ENCODE measurements at regions of chr22 and their contacts with region 1.

Region 1: GRCh38 chr22:21629262-21630149 is at the start of gene YDJC:
- DNase-seq: peak; percentile 88
- ATAC-seq: peak; percentile 98
- H3K4me3 ChIP-seq: peak within 1 kb of the TSS; percentile 93
- H3K27ac ChIP-seq: peak within 1 kb of the TSS; percentile 64
- H3K4me1 ChIP-seq: peaks cover 4% of the 10 kb centered on the region
- H3K27me3 ChIP-seq: no peaks in the 10 kb centered on the region
- CTCF ChIP-seq: peak; percentile 56
- POLR2A ChIP-seq: peak; percentile 73
- RAD21 ChIP-seq: no peak; the same call in 1 of the 2 replicates
- total RNA-seq, gene YDJC: 7.2 and 8.1 TPM in 2 replicates

Region 2: GRCh38 chr22:21641789-21642583 is 12.5 kb after region 1 on chr22 and contains the start of gene SDF2L1:
- CTCF ChIA-PET with region 1: interaction called, 28 read pairs
- POLR2A ChIA-PET with region 1: no interaction called
- dilution Hi-C with region 1: no loop called
- in situ Hi-C with region 1: no loop called
- intact Hi-C with region 1: loop called (anchors 1 kb)
- DNase-seq: peak; percentile 99
- ATAC-seq: peak; percentile 98
- H3K4me3 ChIP-seq: peak within 1 kb of the TSS; percentile 87
- H3K27ac ChIP-seq: peak within 1 kb of the TSS; percentile 53; the same call in 1 of the 2 replicates
- H3K4me1 ChIP-seq: peaks cover 1% of the 10 kb centered on the region; the same call in 1 of the 2 replicates
- H3K27me3 ChIP-seq: no peaks in the 10 kb centered on the region
- CTCF ChIP-seq: no peak
- POLR2A ChIP-seq: peak; percentile 81
- RAD21 ChIP-seq: no peak
- total RNA-seq, gene SDF2L1: 18.8 and 25.0 TPM in 2 replicates

Region 3: DNA sequence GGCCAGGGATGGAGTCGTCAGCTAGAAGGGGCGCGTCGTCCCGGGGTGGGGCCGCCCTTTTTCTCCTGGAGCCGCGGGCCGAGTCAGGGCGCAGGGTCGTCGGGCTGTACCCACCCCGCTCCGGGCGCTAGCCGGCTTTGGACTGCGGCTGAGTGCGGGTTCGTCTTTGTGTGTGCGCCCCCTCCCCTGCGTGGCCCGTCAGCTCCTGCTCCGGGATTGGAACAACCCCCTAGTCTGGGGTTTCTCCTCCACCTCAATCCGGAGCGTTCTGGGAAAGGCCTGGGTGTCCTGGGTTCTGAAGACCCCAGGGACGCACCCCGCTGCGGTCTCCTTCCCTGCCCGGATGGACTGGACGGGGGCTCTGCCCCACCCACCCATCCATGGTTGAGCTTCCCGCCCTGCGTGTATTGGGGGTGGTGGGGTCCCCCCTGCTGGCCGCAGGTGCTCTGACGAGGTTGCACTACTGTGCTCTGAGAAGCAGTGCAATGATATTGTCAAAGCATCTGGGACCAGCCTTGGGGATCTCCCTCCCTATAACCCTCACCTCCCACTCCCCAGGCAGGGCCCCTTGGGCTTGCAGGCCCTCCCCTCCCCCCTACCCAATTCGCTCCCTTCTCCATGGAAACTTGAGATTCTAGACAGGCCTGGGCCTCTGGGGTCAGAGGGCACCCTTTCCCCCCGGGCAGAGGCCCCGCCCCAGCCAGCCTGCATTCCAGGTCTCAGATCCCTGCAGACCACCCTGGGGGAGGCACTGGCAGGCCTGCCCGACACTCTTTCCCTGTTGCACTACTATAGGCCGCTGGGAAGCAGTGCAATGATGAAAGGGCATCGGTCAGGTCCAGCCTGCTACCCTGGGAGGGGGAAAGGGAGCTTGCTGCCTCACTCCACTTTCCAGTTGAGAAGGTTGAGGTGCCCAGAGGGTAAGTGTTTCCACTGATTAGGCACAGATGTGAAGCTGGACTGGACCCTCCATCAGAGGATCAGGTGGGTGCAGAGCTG is 23.3 kb after region 1 on chr22:
- CTCF ChIA-PET with region 1: no interaction called
- POLR2A ChIA-PET with region 1: no interaction called
- dilution Hi-C with region 1: no loop called
- in situ Hi-C with region 1: no loop called
- intact Hi-C with region 1: no loop called
- DNase-seq: no peak
- ATAC-seq: peak; percentile 30; the same call in 1 of the 2 replicates
- H3K4me3 ChIP-seq: peak overlapping the region; percentile 84
- H3K27ac ChIP-seq: peak overlapping the region; percentile 6; the same call in 1 of the 2 replicates
- H3K4me1 ChIP-seq: peaks cover 8% of the 10 kb centered on the region
- H3K27me3 ChIP-seq: no peaks in the 10 kb centered on the region
- CTCF ChIP-seq: no peak
- POLR2A ChIP-seq: no peak
- RAD21 ChIP-seq: no peak

Region 4: GRCh38 chr22:21677606-21678443 is 48.3 kb after region 1 on chr22:
- CTCF ChIA-PET with region 1: no interaction called
- POLR2A ChIA-PET with region 1: no interaction called
- dilution Hi-C with region 1: no loop called
- in situ Hi-C with region 1: no loop called
- intact Hi-C with region 1: no loop called
- DNase-seq: no peak
- ATAC-seq: no peak
- H3K4me3 ChIP-seq: no peak overlapping the region
- H3K27ac ChIP-seq: no peak overlapping the region
- H3K4me1 ChIP-seq: no peaks in the 10 kb centered on the region
- H3K27me3 ChIP-seq: no peaks in the 10 kb centered on the region
- CTCF ChIP-seq: no peak
- POLR2A ChIP-seq: no peak
- RAD21 ChIP-seq: no peak